Activated T-helper 2 cell treated with anti-CD3 and anti-CD28 coated beads, Interferon-gamma antibody, Interleukin-2, Interleukin-4, amounts not matched to agents 10 μg/mL and 5 μg/mL and 100 μg/mL, durations not matched to agents 14 hours and 24 hours and 36 hours (primary cell): ENCODE measurements at regions of chr4 and their contacts with region 1.

Region 1: GRCh38 chr4:3074078-3074795 is at the starts of genes HTT and HTT-AS:
- DNase-seq: peak; percentile 90
- H3K4me3 Mint-ChIP-seq: peak within 1 kb of the TSS; percentile 89
- H3K27ac Mint-ChIP-seq: peak within 1 kb of the TSS; percentile 79
- H3K4me1 Mint-ChIP-seq: peaks cover 19% of the 10 kb centered on the region
- H3K27me3 Mint-ChIP-seq: no peaks in the 10 kb centered on the region
- total RNA-seq, gene HTT: 65.3 and 71.9 TPM in 2 replicates
- total RNA-seq, gene HTT-AS: not detected in 2 replicates

Region 2: DNA sequence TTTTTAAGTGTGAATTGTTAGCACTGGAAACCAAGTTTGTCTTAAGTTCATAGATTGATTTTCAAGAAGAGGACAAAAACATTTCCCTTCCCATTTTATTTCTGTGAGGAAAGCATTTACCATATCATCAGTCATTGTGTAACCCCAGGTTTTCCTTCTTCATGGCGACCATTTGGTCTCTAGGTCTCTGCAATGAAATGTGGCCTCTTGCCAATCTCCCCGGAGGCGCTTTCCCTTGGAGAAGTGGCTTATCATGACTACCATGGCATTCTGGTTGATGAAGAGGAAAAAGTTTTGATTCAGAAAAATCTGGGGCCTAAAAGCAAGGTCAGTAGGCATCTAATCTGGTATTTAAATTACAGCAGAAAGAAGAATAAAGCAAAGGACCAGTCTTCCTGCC is 176.2 kb before region 1 on chr4:
- intact Hi-C with region 1: no loop called
- DNase-seq: no peak
- H3K4me3 Mint-ChIP-seq: no peak overlapping the region
- H3K27ac Mint-ChIP-seq: no peak overlapping the region
- H3K4me1 Mint-ChIP-seq: no peaks in the 10 kb centered on the region
- H3K27me3 Mint-ChIP-seq: no peaks in the 10 kb centered on the region

Region 3: DNA sequence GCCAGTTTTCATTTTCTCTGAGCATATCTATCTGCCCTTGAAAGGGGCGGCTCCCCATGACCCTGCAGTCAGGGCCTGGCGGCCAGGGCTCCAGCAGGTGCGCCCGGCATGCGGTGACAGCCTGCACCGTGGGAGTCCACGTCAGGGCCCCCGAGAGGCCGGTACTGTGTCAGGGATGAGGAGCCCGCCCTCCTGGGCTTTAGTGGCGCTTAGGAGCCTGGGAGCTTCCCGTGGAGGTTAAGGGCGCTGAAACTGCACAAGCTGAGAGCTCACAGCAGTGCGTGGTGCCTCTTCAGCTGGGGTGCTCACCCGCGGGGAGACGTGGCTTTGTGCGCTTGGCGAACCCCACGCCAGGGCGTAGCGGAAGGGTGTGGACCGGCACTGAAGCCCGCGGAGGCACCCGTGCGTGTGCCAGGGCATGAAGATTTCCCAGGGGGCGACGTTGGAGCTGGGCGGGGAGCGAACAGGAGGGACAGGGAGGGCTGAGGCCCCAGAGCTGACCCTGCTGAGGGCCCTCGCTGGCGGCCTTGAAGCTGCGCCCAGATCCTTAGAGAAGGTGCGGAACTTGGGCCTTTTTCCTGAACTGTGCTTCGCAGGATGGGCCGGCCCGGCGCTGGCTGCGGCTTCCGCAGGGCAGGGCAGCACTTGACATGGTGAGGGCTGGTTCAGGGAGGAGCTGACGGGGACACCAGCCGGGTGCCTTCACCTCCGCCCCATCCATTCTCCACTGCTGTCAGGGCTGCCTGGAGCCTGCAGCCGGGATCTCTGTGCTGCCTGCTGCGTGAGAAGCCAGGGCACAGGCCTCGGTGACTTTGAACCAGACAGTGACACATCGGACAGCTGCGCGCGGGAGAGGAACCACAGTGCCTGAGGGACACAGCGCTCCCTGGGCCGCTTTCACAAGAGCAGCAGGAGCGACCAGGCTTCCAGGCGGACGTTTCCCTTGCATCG is 32.8 kb before region 1 on chr4:
- intact Hi-C with region 1: loop called (anchors 1 kb)
- DNase-seq: peak; percentile 43
- H3K4me3 Mint-ChIP-seq: peak overlapping the region; percentile 84
- H3K27ac Mint-ChIP-seq: peak overlapping the region; percentile 74
- H3K4me1 Mint-ChIP-seq: peaks cover 47% of the 10 kb centered on the region
- H3K27me3 Mint-ChIP-seq: peaks cover 3% of the 10 kb centered on the region

Region 4: GRCh38 chr4:3047464-3048286 is 26.6 kb before region 1 on chr4:
- intact Hi-C with region 1: loop called (anchors 1 kb)
- DNase-seq: peak; percentile 83
- H3K4me3 Mint-ChIP-seq: peak overlapping the region; percentile 9
- H3K27ac Mint-ChIP-seq: peak overlapping the region; percentile 67
- H3K4me1 Mint-ChIP-seq: peaks cover 27% of the 10 kb centered on the region
- H3K27me3 Mint-ChIP-seq: peaks cover 8% of the 10 kb centered on the region

Region 5: GRCh38 chr4:3292571-3293400 is 218.5 kb after region 1 on chr4 and contains the start of gene RGS12:
- intact Hi-C with region 1: loop called (anchors 1 kb)
- DNase-seq: peak; percentile 82
- H3K4me3 Mint-ChIP-seq: peak within 1 kb of the TSS; percentile 88
- H3K27ac Mint-ChIP-seq: peak within 1 kb of the TSS; percentile 46
- H3K4me1 Mint-ChIP-seq: peaks cover 10% of the 10 kb centered on the region
- H3K27me3 Mint-ChIP-seq: peaks cover 38% of the 10 kb centered on the region
- total RNA-seq, gene RGS12: 7.0 and 8.3 TPM in 2 replicates